RWPE1 (cell line): ENCODE measurements at regions of chr5 and their contacts with region 1.

Region 1: DNA sequence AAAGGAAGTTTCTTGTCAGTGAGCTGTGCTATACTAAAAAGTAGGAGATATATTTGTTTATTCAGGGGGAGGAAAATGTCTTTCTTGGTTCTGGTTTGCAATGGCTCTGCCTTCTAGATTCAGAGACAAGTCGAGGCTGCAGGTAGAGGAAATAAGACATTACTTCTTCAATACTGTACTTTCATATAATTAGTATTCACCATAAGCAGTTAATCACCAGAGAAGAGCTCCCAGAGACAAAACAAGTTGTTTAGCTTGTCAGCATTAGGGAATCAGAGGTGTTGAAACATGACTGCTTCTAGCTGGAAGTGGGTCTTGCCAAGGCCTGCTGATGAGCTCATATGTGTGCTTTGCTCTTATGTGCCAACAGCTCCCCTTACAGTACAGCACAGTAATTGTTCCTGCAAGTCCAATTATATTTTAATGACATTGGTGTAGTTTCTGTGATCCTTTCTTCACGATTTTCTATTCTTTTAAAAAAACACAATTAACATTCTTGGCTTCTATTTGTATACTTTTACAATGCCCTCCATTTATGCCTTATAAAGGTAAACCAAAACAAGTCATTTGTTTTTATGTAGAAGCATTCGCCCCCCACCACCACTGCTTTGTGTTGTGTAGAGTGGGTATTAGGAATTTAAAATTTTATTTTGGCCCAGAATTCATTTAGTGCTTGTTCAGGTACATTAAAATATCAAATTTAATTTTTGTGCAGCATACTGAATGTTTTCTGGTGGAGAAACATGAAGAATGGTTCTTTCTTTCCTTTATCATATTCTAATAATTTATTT is 112.2 kb downstream of the RPS23 start:
- DNase-seq: peak; percentile 86
- H3K27ac ChIP-seq: no peak overlapping the region
- CTCF ChIP-seq: peak; percentile 97

Region 2: DNA sequence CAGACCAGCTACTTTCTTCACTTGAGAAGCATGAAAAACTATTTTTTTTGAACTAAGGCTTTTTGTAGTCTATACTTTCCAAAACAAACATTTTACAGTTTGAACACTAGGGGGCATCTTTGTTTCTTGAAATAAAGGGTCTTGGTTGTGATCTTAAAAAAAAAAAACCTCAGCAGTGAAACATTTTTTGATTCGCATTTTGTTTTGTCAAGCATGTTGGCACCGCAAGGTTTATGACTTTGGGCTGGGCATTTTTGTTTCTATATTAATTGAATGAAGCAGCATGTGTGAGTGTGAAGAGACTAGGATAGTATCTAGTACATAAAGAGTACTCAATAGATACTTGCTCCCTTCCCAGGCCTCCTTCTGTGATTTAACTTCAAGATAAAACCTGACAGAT is 740.4 kb before region 1 on chr5:
- CTCF ChIA-PET with region 1: interaction called, 19 read pairs
- POLR2A ChIA-PET with region 1: no interaction called
- DNase-seq: peak; percentile 44
- H3K27ac ChIP-seq: no peak overlapping the region
- CTCF ChIP-seq: peak; percentile 76

Region 3: DNA sequence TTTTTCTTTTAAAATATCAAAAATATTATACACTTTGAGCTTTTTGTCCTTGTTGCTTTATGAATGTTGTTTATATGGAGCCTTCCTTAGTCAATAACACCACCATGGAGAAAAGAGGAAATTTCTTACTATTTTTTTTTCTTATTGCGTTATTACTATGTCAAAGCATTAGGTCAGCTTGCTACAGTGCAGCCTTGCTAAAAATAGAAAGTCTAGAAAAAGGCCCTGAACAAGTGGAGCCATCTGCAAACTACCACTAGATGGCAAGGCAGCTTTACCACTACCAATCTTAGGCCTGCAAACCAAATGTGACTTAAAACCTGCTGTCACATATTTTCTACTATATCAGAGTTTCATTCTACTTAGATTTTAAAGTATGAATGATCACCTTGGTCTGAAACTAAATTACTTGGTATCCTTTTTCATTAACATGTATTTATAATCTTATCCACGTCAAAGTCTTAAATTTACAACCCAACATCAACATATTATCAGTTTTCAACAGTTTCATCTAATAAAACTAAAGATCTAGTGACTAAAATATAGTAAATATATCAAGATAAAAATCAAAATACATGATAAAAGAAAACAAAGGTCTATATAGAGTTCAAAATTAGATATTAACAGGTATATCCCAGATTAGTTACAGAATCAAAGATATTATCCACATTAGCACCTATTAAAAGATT is 658.9 kb before region 1 on chr5:
- CTCF ChIA-PET with region 1: interaction called, 13 read pairs
- POLR2A ChIA-PET with region 1: no interaction called
- DNase-seq: peak; percentile 70
- H3K27ac ChIP-seq: no peak overlapping the region
- CTCF ChIP-seq: peak; percentile 96

Region 4: DNA sequence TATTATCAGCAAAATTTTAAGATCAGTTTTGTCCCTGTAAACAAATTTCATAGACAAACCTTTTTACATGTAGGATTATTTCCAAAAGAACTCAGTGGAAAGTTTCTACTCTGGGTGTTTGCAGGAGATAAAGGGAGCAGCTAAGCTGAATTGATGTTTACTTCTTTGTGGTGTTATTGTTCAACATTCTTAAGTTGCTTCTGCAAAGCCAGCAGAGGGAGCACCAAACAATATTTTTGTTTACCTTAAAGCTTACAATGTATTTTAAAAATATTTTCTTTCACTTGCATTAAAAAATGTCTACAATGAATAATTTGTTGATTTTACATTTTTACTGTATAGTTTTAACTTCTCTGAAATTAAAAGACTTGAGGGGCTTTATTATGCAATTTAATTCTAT is 58.7 kb before region 1 on chr5:
- CTCF ChIA-PET with region 1: interaction called, 20 read pairs
- POLR2A ChIA-PET with region 1: no interaction called
- DNase-seq: peak; percentile 13
- H3K27ac ChIP-seq: no peak overlapping the region
- CTCF ChIP-seq: peak; percentile 67

Region 5: GRCh38 chr5:82218374-82219156 is 52.6 kb after region 1 on chr5:
- CTCF ChIA-PET with region 1: no interaction called
- POLR2A ChIA-PET with region 1: no interaction called
- DNase-seq: no peak
- H3K27ac ChIP-seq: no peak overlapping the region
- CTCF ChIP-seq: no peak

Region 6: DNA sequence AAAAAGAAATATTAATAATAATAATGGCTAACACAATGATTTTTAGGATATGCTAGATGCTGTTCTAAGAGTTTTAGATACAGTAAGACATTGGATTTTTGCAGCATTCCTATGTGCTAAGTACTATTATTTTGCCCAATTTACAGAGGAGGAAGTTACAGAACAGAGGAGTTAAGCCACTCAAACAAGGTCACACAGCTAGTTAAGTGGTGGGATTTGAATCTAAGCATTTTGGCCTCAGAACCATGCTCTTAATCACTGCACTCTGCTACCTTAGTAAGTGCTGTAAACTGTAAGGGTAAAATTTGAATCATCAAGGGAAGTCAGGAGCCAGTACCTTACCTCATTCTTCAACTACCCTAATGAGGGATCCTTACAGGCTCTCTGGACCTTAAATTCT is 86.8 kb after region 1 on chr5:
- CTCF ChIA-PET with region 1: no interaction called
- POLR2A ChIA-PET with region 1: no interaction called
- DNase-seq: no peak
- H3K27ac ChIP-seq: no peak overlapping the region
- CTCF ChIP-seq: no peak